Activated CD4-positive, alpha-beta memory T cell treated with anti-CD3 and anti-CD28 coated beads for 36 hours (primary cell): ENCODE measurements at regions of chr9 and their contacts with region 1.

Region 1: DNA sequence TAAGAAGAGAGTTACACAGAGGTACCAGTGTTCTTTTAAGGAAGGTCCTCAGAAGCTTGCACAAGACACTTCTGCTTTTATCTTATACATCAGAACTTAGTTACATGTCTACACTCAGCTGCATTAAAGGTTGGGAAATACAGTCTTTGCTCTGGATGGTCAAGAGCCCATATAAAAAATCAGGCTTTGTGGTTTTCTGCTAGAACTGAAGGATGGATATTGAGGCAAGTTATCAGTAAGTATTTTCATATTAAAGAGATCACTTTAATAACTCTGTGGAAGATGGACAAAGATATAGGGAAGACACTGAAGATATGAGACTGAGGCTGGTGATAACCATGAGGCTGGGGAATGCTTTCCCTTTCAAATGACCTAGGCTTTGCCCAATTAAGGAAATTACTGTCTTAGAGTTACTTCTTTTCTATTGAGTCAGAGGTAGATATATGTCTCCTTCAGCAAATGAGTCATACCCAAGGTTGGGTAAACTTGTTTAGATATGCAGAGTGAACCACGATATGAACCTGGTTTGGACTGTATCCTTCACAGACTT is 87.0 kb upstream of the TNC start:
- DNase-seq: no peak
- H3K4me3 Mint-ChIP-seq: no peak overlapping the region
- H3K27ac Mint-ChIP-seq: no peak overlapping the region
- H3K4me1 Mint-ChIP-seq: peaks cover 27% of the 10 kb centered on the region
- H3K27me3 Mint-ChIP-seq: peaks cover 46% of the 10 kb centered on the region

Region 2: GRCh38 chr9:114829574-114830440 is 375.2 kb before region 1 on chr9:
- CTCF ChIA-PET with region 1: no interaction called
- POLR2A ChIA-PET with region 1: no interaction called
- intact Hi-C with region 1: loop called (anchors 5 kb)
- DNase-seq: no peak
- H3K4me3 Mint-ChIP-seq: no peak overlapping the region
- H3K27ac Mint-ChIP-seq: no peak overlapping the region
- H3K4me1 Mint-ChIP-seq: peaks cover 13% of the 10 kb centered on the region
- H3K27me3 Mint-ChIP-seq: no peaks in the 10 kb centered on the region

Region 3: DNA sequence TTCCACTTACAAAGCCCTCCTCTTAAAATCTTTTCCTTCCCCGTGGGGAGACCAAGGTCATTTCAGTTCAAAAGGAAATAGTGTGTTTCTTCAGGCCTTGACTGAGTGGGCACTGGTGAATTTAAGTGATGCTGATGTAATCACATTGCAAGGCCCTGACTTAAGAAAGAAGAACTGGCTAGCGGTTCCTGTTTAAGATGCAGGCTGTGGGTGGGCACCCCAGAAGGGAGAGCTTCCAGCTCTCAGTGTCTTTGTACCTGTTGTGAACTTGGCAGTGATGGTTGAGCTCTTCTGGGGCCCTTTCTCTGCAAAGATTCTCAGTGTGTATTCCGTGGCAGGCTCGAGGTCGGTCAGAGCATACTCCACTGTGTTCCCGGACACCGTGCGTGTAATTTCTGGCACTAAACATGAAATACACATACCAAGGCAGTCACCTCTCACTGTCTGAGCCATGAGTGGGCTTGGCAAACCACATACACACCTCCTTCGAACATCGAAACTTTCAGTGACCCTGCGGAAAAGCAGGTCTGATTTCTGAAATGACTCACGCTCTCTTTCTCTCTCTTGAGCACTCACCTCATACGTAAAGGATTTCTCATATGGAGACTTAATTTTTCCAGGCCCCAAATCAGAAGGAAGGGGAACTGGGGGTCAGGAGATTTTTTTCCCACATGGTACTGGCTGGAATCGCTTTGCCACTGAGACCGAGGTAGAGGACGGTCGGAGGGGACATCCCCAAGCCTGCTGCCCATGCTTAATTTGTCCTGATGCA is 169.0 kb before region 1 on chr9:
- CTCF ChIA-PET with region 1: no interaction called
- POLR2A ChIA-PET with region 1: no interaction called
- intact Hi-C with region 1: loop called (anchors 1 kb)
- DNase-seq: peak; percentile 83
- H3K4me3 Mint-ChIP-seq: peak overlapping the region; percentile 62
- H3K27ac Mint-ChIP-seq: peak overlapping the region; percentile 91
- H3K4me1 Mint-ChIP-seq: peaks cover 33% of the 10 kb centered on the region
- H3K27me3 Mint-ChIP-seq: no peaks in the 10 kb centered on the region

Region 4: DNA sequence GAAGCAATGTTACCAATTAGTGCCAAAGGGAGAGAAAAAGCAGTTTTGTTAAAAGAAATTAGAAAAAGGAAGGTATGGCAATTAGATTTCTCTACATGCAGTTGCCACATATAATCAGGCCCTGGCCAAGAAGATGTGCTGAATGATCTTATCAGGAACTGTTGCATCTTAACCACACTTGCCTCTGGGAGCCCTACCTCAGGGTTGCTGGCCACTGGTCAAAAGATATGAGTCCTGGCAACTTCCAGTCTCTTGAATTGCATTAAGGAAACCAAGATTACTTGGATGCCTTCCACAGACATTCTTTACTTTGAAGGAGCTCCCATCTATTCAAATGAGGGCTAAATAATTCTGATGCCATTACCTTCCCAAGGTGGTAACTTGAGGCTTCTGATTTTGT is 147.4 kb before region 1 on chr9:
- CTCF ChIA-PET with region 1: no interaction called
- POLR2A ChIA-PET with region 1: no interaction called
- intact Hi-C with region 1: no loop called
- DNase-seq: no peak
- H3K4me3 Mint-ChIP-seq: no peak overlapping the region
- H3K27ac Mint-ChIP-seq: no peak overlapping the region
- H3K4me1 Mint-ChIP-seq: no peaks in the 10 kb centered on the region
- H3K27me3 Mint-ChIP-seq: peaks cover 14% of the 10 kb centered on the region

Region 5: GRCh38 chr9:115359017-115359780 is 154.2 kb after region 1 on chr9:
- CTCF ChIA-PET with region 1: no interaction called
- POLR2A ChIA-PET with region 1: no interaction called
- intact Hi-C with region 1: no loop called
- DNase-seq: no peak
- H3K4me3 Mint-ChIP-seq: no peak overlapping the region
- H3K27ac Mint-ChIP-seq: no peak overlapping the region
- H3K4me1 Mint-ChIP-seq: no peaks in the 10 kb centered on the region
- H3K27me3 Mint-ChIP-seq: peaks cover 3% of the 10 kb centered on the region